Caco-2 (cell line): ENCODE measurements at regions of chr15 and their contacts with region 1.

Region 1: GRCh38 chr15:89874926-89875564 is 18.7 kb downstream of the AP3S2 start:
- DNase-seq: peak; percentile 76 to 82
- H3K4me3 ChIP-seq: no peak overlapping the region
- H3K4me3 Mint-ChIP-seq: no peak overlapping the region
- H3K27ac Mint-ChIP-seq: no peak overlapping the region
- H3K4me1 ChIP-seq: peaks cover 6% of the 10 kb centered on the region; the same call in 1 of the 2 replicates
- H3K4me1 Mint-ChIP-seq: no peaks in the 10 kb centered on the region
- H3K27me3 ChIP-seq: no peaks in the 10 kb centered on the region
- H3K27me3 Mint-ChIP-seq: no peaks in the 10 kb centered on the region
- CTCF ChIP-seq: peak; percentile 88 to 94

Region 2: DNA sequence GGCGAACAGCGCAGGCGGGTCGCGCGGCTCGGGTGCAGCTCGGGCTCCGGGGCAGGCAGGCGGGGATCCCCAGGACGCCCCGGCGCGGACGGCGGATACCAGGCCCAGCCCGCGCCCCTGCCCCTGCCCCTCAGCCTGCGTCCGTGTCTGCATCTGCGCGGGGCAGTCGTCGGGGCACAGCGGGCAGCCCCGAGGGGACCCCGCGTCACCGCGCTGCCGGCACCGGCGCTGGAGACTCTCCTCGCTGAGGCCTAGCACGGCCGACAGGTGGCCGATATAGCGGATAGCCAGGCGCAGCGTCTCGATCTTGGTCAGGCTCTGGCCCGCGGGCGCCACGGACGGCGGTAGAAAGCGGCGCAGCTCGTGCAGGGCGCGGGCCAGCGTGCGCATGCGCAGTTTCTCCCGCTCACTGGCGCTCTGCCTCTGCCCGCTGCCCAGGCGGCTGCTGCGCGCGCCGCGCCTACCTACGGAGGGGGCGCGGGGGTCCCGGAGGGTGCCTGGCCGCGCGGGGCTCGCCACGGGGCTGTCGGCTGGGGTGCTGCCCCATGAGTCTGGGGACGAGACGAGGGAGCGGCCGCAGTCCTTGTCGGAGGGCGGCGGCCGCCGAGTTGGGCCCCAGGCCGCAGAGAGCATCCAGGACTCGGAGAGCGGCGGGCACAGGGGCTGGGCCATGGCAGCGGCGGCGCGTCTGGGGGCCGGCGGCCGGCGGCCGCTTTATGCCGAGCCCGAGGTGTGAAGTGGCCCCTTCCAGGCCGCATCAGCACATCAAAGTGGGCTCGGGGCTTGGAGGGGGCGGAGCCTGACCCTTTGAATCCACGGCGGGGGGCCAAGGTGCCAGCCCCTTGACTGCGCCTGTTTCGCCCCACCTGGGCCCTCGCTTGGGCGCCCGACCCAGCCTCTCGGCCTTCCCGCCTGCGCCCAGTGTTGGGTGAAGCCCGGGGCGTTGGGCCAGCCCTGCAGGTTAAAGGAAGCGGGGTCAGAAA is 124.2 kb before region 1 on chr15 and contains the start of gene MESP1:
- CTCF ChIA-PET with region 1: interaction called, 14 read pairs
- POLR2A ChIA-PET with region 1: no interaction called
- intact Hi-C with region 1: no loop called
- DNase-seq: peak; percentile 92 to 95
- H3K4me3 ChIP-seq: peak within 1 kb of the TSS; percentile 59
- H3K4me3 Mint-ChIP-seq: peak within 1 kb of the TSS; percentile 62
- H3K27ac Mint-ChIP-seq: no peak within 1 kb of the TSS
- H3K4me1 ChIP-seq: peaks cover 13% of the 10 kb centered on the region
- H3K4me1 Mint-ChIP-seq: peaks cover 9% of the 10 kb centered on the region
- H3K27me3 ChIP-seq: no peaks in the 10 kb centered on the region
- H3K27me3 Mint-ChIP-seq: no peaks in the 10 kb centered on the region
- CTCF ChIP-seq: peak; percentile 83 to 85
- total RNA-seq, gene MESP1: 1.00 and 2.2 TPM in 2 replicates

Region 3: DNA sequence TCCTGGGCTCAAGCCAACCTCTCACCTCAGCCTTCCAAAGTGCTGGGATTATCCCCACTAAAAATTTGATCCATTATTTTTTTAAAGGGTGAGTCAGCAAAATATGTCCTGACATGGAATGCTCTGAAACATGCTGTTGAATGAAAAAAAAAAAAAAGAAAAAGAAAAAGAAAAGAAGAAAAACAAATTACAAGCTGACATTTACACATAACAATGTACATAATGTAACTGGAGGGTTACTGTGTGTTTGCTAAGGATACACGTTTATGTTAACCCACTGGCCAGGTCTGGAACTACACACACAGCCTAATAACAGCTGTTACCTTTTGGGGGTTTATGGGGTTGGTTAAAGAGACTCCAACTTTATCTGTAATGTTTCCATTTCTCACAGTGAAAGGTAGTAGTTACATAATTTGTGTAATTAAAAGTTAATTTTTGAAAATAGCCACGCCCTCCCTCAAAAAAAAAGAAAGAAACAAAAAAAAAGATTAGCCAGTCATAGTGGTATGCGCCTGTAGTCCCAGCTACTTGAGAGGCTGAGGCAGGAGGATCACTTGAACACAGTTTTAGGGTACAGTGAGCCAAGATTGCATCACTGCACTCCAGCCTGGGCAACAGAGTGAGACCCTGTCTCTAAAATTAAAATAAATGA is 102.0 kb before region 1 on chr15:
- CTCF ChIA-PET with region 1: interaction called, 12 read pairs
- POLR2A ChIA-PET with region 1: interaction called, 3 read pairs
- intact Hi-C with region 1: no loop called
- DNase-seq: peak in 1 of 2 experiments; percentile 40
- H3K4me3 ChIP-seq: no peak overlapping the region
- H3K4me3 Mint-ChIP-seq: no peak overlapping the region
- H3K27ac Mint-ChIP-seq: no peak overlapping the region
- H3K4me1 ChIP-seq: 0 out of 2 replicates have a peak, but pooled peaks cover 8% of the 10 kb centered on the region
- H3K4me1 Mint-ChIP-seq: no peaks in the 10 kb centered on the region
- H3K27me3 ChIP-seq: no peaks in the 10 kb centered on the region
- H3K27me3 Mint-ChIP-seq: no peaks in the 10 kb centered on the region
- CTCF ChIP-seq: peak; percentile 22 to 39